GM23248 (cell line): ENCODE measurements at regions of chr10 and their contacts with region 1.

Region 1: GRCh38 chr10:16832351-16833080 is 15.3 kb upstream of the RSU1 start:
- DNase-seq: peak; percentile 98
- H3K4me3 ChIP-seq: peak overlapping the region; percentile 55
- H3K27ac ChIP-seq: peak overlapping the region; percentile 97
- H3K4me1 ChIP-seq: peaks cover 40% of the 10 kb centered on the region
- H3K27me3 ChIP-seq: no peaks in the 10 kb centered on the region

Region 2: GRCh38 chr10:17249820-17250219 is 417.3 kb after region 1 on chr10:
- in situ Hi-C with region 1: loop called (anchors 5 kb)
- DNase-seq: peak; percentile 32
- H3K4me3 ChIP-seq: no peak overlapping the region
- H3K27ac ChIP-seq: no peak overlapping the region
- H3K4me1 ChIP-seq: no peaks in the 10 kb centered on the region
- H3K27me3 ChIP-seq: no peaks in the 10 kb centered on the region

Region 3: GRCh38 chr10:17428351-17429097 is 596.0 kb after region 1 on chr10:
- in situ Hi-C with region 1: loop called (anchors 10 kb)
- DNase-seq: no peak
- H3K4me3 ChIP-seq: no peak overlapping the region
- H3K27ac ChIP-seq: no peak overlapping the region
- H3K4me1 ChIP-seq: no peaks in the 10 kb centered on the region
- H3K27me3 ChIP-seq: no peaks in the 10 kb centered on the region; the same call in 1 of the 2 replicates